ENCODE measurements at regions of chr20 and their contacts with region 1.

Region 1: GRCh38 chr20:7841971-7842310 is 98.3 kb downstream of the HAO1 start:
- DNase-seq: peak; percentile 67 to 85 (median 74)
- ATAC-seq: peak; percentile 96 to 99
- H3K4me3 ChIP-seq: no peak overlapping the region
- H3K27ac ChIP-seq: no peak overlapping the region
- H3K4me1 ChIP-seq: no peaks in the 10 kb centered on the region
- H3K27me3 ChIP-seq: no peaks in the 10 kb centered on the region

Region 2: GRCh38 chr20:6277661-6278240 is 1564.2 kb before region 1 on chr20:
- intact Hi-C with region 1: no loop called
- DNase-seq: no peak
- ATAC-seq: no peak
- H3K4me3 ChIP-seq: no peak overlapping the region
- H3K27ac ChIP-seq: no peak overlapping the region
- H3K4me1 ChIP-seq: no peaks in the 10 kb centered on the region
- H3K27me3 ChIP-seq: no peaks in the 10 kb centered on the region

Region 3: DNA sequence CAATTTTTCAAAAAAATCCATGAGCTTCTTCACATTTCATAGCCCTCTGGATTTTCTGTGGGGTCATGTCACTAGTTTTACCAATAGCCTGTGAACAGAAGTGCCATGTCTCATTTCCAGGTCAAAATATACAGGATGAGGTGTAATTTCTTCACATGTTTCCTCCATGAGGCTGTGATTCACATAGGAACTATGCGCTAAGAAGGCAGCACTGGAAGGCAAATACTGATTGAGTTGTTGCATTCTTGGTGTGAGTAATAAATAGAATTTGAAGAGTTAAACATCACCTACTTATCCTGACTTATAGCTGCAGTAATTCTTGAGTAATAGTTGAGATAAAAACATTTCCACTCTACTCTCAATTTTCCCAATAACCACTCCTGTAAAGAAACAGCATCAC is 344.0 kb before region 1 on chr20:
- intact Hi-C with region 1: no loop called
- DNase-seq: no peak
- ATAC-seq: no peak
- H3K4me3 ChIP-seq: no peak overlapping the region
- H3K27ac ChIP-seq: no peak overlapping the region
- H3K4me1 ChIP-seq: no peaks in the 10 kb centered on the region
- H3K27me3 ChIP-seq: no peaks in the 10 kb centered on the region

Region 4: DNA sequence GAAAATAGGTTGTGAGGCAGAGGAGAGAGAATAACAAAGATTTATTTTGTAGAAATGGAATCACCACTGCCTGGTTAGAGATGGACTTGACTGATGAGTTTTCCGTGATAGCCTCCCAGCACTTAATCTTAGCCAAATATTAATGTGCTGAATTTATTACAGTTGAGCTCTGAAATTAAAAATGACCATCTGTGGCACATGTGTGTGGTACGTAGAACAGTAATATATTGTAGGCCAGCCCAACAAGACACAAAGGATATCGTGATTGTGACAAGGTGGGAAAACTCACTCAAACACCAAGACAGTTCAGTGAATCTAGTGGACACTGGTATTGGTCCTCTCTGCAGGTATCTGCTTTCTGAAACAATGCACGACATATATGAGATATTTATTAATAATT is 21.0 kb before region 1 on chr20:
- intact Hi-C with region 1: loop called in 1 of 4 experiments (anchors 2 kb)
- DNase-seq: no peak
- ATAC-seq: no peak
- H3K4me3 ChIP-seq: no peak overlapping the region
- H3K27ac ChIP-seq: no peak overlapping the region
- H3K4me1 ChIP-seq: no peaks in the 10 kb centered on the region
- H3K27me3 ChIP-seq: no peaks in the 10 kb centered on the region

Region 5: GRCh38 chr20:7893014-7893707 is 51.2 kb after region 1 on chr20:
- intact Hi-C with region 1: no loop called
- DNase-seq: no peak
- ATAC-seq: no peak
- H3K4me3 ChIP-seq: no peak overlapping the region
- H3K27ac ChIP-seq: no peak overlapping the region
- H3K4me1 ChIP-seq: no peaks in the 10 kb centered on the region
- H3K27me3 ChIP-seq: no peaks in the 10 kb centered on the region